ENCODE measurements at regions of chr13 and their contacts with region 1.

Region 1: DNA sequence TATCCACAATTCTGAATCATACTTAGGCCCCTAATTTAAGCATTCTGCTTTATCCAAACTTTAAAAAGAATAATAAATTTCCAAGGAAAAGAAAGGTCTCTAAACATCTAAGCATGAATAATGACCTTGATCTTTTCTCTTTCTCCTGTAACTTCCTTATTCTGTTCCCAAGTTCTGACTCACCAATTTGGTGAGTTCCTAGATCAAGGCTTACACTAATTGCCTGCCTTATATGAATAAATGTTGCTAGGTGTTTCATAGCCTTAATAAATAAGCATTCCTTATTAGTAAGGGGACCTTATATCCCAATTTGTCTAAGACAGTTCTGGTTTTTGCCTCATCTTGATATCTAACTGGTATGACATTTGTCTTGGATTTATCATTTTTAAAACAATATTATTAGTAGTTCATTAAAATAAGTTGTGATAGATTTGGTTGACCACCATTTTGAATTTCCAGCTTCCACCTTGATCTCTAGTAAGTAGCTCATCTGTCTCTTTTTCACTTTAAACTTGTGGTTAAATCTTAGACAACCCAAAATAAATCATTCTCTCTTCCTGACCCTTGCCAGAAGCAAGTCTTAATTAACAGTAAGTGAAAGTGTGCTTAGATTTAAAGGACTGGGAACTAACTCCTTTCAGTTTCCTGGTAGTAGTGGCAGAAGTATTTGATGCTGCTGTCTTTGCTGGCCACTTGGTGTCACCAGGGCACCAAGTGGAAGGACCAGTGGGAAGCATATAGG is 121.2 kb upstream of the MLNR start:
- DNase-seq: peak; percentile 10
- H3K4me3 Mint-ChIP-seq: no peak overlapping the region
- H3K27ac Mint-ChIP-seq: peak overlapping the region; percentile 58
- H3K4me1 Mint-ChIP-seq: peaks cover 33% of the 10 kb centered on the region
- H3K27me3 Mint-ChIP-seq: no peaks in the 10 kb centered on the region
- CTCF ChIP-seq: no peak

Region 2: GRCh38 chr13:48542581-48543341 is 556.2 kb before region 1 on chr13:
- CTCF ChIA-PET with region 1: no interaction called
- intact Hi-C with region 1: no loop called
- DNase-seq: peak; percentile 24
- H3K4me3 Mint-ChIP-seq: no peak overlapping the region
- H3K27ac Mint-ChIP-seq: no peak overlapping the region
- H3K4me1 Mint-ChIP-seq: no peaks in the 10 kb centered on the region
- H3K27me3 Mint-ChIP-seq: no peaks in the 10 kb centered on the region
- CTCF ChIP-seq: no peak

Region 3: DNA sequence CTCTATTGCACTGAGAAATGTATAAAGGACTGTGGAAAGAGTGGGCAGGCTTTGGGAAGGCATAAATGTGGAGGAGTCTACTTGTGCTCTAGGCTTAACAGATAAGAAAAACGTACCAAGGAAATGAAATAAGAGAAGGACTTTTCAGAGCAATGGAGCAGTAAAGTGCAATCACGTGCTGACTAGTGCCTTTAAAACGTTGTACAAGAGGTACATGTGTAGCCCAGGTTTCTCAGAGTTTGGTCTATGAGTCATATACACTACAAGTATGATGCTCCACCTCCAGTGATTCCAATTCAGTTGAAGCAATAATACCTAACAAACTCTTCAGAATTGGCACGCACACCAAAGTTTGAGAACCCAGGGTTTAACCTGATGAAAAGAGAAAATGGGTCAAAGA is 136.7 kb before region 1 on chr13:
- CTCF ChIA-PET with region 1: no interaction called
- intact Hi-C with region 1: no loop called
- DNase-seq: no peak
- H3K4me3 Mint-ChIP-seq: no peak overlapping the region
- H3K27ac Mint-ChIP-seq: no peak overlapping the region
- H3K4me1 Mint-ChIP-seq: no peaks in the 10 kb centered on the region
- H3K27me3 Mint-ChIP-seq: no peaks in the 10 kb centered on the region
- CTCF ChIP-seq: no peak

Region 4: GRCh38 chr13:49279885-49280284 is 180.9 kb after region 1 on chr13:
- CTCF ChIA-PET with region 1: interaction called, 9 read pairs
- intact Hi-C with region 1: loop called (anchors 2 kb)
- DNase-seq: no peak
- H3K4me3 Mint-ChIP-seq: no peak overlapping the region
- H3K27ac Mint-ChIP-seq: no peak overlapping the region
- H3K4me1 Mint-ChIP-seq: no peaks in the 10 kb centered on the region
- H3K27me3 Mint-ChIP-seq: no peaks in the 10 kb centered on the region
- CTCF ChIP-seq: no peak